ENCODE measurements at regions of chr10 and their contacts with region 1.

Region 1: DNA sequence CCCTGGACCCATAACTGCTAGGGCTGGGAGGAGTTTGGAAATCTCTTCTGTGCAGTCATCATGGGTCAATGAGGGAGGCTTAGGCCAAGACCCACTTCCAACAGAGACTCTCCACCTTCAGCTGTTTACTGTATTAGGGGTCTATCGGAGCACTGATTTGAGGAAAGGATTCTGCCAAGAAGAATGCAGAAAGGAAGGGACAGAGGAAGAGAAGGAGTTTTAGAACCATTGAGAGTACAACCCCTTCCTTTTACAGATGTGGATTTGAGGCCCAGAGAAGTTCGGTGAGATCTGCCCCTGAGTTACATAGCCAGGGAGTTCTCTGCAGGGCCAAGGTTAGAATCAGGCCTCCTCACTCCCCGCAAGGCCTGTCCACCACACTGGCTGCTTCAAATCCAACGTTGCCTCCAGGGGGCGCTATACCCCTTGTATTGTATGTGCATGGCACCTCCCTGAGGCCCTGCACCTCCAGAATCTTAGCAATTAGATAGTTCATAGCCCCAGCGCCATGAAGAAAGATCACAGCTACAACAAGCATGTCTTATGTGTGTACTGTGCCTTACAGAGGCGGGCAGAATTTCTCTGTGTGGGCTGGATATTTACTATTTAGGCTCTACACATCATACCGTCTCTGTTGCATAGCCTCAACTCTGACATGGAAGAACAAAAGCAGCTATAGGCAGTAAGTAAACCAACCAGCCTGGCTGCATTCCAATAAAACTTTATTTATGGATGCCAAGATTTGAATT is 246.8 kb downstream of the SKIDA1 start:
- DNase-seq: peak; percentile 83 to 97
- ATAC-seq: peak; percentile 94 to 96
- H3K4me3 ChIP-seq: no peak overlapping the region
- H3K27ac ChIP-seq: peak overlapping the region; percentile 74 to 85
- H3K4me1 ChIP-seq: peaks cover 66% of the 10 kb centered on the region
- CTCF ChIP-seq: peak; percentile 88
- EP300 ChIP-seq: no peak
- POLR2A ChIP-seq: no peak
- RAD21 ChIP-seq: peak; percentile 97 to 98

Region 2: DNA sequence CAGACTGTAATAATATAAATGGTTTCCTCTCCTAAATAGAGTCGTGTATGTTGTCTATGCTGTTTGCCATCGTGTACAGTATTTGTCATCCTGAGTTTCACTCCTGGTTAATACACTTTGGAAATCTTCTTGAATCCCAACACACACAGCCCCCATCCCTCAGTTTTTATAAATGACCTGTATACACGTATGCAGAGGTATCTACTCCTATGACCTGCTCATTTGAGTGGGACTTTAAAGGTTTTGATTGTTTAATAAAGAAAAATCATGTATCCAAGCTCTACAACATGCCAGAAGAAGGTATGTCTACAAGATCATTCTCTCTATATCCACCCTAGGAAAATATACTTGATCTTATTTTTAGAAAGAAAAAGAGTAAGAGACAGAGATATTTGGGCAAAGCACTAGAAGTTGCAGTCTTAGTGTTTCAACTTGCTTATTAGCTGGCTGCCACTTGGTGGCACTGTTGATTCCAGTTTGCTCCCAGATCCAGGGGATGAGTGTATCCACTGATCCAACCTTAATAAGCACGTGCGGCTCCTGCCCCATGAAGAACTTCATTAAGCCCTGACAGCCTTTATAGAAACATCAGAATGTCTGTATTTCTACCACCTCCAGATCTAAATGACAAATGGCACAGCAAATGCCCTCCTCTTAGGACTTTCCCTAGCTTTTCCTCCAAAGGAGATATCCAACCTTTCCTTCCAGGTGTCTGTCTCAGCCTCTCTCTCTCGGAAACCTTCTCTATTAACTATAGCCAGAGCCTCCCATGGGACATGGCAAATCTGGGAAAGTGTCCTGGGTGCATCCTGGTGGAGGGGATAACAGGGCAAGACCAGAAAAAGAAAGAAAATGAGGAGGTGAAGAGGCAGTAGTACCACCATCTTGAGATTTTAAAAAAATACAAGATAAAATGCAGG is 200.0 kb before region 1 on chr10:
- CTCF ChIA-PET with region 1: interaction called, 137 read pairs
- POLR2A ChIA-PET with region 1: no interaction called
- DNase-seq: peak; percentile 55 to 81
- ATAC-seq: peak; percentile 95 to 97
- H3K4me3 ChIP-seq: no peak overlapping the region
- H3K27ac ChIP-seq: peak overlapping the region; percentile 74 to 75
- H3K4me1 ChIP-seq: peaks cover 20% of the 10 kb centered on the region
- CTCF ChIP-seq: peak; percentile 92
- EP300 ChIP-seq: no peak
- POLR2A ChIP-seq: no peak
- RAD21 ChIP-seq: peak; percentile 98

Region 3: DNA sequence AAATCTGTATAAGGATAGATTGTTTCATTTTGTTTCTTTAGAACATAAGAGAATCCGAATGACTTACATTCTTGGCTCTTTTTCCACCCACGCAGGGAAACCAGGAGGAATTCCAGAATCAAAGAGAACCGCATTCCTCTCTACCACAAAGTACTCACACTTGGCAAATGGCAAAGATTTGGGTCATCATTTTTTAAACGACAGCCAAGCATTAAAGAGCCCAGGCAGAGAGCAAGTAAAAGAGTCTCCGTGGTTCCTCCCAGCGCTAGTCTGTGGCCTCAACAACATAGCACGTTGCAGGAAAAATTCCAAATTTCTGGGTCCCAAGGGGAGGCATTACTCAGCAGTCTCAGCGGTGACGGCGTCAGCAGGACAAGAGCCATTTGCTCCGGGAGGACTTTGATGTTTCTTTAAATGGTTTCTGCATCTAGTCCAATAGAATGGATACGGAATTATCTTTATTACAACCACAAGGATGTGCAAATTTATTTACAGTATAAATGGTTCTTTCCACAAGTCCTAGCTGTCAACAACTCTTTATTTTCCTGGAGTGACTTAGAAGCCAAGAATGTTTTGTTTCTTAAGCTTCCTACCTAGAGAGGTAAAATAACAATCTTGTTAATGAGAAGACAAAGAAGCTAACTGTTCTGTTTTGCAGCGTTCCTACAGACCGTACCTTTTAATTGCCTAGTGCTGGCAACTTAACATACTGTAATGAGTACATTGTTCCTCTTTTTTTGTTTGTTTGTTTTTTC is 14.3 kb after region 1 on chr10:
- CTCF ChIA-PET with region 1: interaction called, 13 read pairs
- POLR2A ChIA-PET with region 1: interaction called, 8 read pairs
- DNase-seq: peak; percentile 89 to 98
- ATAC-seq: peak; percentile 93 to 97
- H3K4me3 ChIP-seq: peak overlapping the region; percentile 44
- H3K27ac ChIP-seq: peak overlapping the region; percentile 92 to 97
- H3K4me1 ChIP-seq: peaks cover 59% of the 10 kb centered on the region
- CTCF ChIP-seq: no peak
- EP300 ChIP-seq: peak; percentile 86 to 98
- POLR2A ChIP-seq: no peak
- RAD21 ChIP-seq: peak; percentile 40 to 65

Region 4: GRCh38 chr10:21304608-21305007 is 25.9 kb after region 1 on chr10:
- CTCF ChIA-PET with region 1: interaction called, 11 read pairs
- POLR2A ChIA-PET with region 1: no interaction called
- DNase-seq: no peak
- ATAC-seq: no peak; a peak in 1 of 6 replicates
- H3K4me3 ChIP-seq: no peak overlapping the region
- H3K27ac ChIP-seq: peak overlapping the region; percentile 10 to 71
- H3K4me1 ChIP-seq: peaks cover 13% of the 10 kb centered on the region
- CTCF ChIP-seq: no peak
- EP300 ChIP-seq: no peak
- POLR2A ChIP-seq: no peak
- RAD21 ChIP-seq: no peak

Region 5: DNA sequence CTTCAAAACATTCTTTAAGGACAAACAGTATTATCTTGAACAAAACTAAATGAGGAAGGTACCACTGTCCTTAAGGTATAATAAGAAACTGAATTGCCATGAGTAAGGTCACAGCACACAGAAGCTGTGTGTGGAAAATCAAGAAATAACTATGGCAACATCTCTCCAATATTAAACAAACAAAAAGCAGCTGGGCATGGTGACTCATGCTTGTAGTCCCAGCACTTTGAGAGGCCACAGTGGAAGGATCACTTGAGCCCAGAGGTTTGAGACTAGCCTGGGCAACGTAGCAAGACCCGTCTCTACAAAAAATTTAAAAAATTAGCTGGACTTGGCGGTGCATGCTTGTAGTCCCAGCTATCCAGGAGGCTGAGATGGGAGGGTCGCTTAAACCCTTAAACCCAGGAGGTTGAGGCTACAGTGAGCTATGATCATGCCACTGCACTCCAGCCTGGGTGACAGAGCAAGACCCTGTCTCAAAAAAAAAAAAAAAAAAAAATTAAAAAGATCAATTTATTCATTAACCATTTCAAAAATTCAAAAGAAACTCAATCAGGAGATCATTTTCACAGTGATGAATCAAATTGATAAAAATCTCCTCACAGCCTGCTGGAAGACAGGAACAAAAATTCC is 51.4 kb after region 1 on chr10:
- CTCF ChIA-PET with region 1: interaction called, 11 read pairs
- POLR2A ChIA-PET with region 1: interaction called, 3 read pairs
- DNase-seq: peak; percentile 64 to 94
- ATAC-seq: peak; percentile 83 to 93
- H3K4me3 ChIP-seq: no peak overlapping the region
- H3K27ac ChIP-seq: peak overlapping the region; percentile 95 to 96
- H3K4me1 ChIP-seq: peaks cover 64% of the 10 kb centered on the region
- CTCF ChIP-seq: no peak
- EP300 ChIP-seq: no peak
- POLR2A ChIP-seq: no peak
- RAD21 ChIP-seq: peak; percentile 23 to 26; a peak in 2 of 5 replicates

Region 6: GRCh38 chr10:21336476-21337170 is 58.0 kb after region 1 on chr10:
- CTCF ChIA-PET with region 1: interaction called, 21 read pairs
- POLR2A ChIA-PET with region 1: no interaction called
- DNase-seq: peak; percentile 86 to 97
- ATAC-seq: peak; percentile 88 to 90
- H3K4me3 ChIP-seq: no peak overlapping the region
- H3K27ac ChIP-seq: peak overlapping the region; percentile 95 to 96
- H3K4me1 ChIP-seq: peaks cover 55% of the 10 kb centered on the region
- CTCF ChIP-seq: peak; percentile 31
- EP300 ChIP-seq: peak; percentile 58 to 73; a peak in 3 of 5 replicates
- POLR2A ChIP-seq: no peak
- RAD21 ChIP-seq: peak; percentile 63 to 75

Region 7: DNA sequence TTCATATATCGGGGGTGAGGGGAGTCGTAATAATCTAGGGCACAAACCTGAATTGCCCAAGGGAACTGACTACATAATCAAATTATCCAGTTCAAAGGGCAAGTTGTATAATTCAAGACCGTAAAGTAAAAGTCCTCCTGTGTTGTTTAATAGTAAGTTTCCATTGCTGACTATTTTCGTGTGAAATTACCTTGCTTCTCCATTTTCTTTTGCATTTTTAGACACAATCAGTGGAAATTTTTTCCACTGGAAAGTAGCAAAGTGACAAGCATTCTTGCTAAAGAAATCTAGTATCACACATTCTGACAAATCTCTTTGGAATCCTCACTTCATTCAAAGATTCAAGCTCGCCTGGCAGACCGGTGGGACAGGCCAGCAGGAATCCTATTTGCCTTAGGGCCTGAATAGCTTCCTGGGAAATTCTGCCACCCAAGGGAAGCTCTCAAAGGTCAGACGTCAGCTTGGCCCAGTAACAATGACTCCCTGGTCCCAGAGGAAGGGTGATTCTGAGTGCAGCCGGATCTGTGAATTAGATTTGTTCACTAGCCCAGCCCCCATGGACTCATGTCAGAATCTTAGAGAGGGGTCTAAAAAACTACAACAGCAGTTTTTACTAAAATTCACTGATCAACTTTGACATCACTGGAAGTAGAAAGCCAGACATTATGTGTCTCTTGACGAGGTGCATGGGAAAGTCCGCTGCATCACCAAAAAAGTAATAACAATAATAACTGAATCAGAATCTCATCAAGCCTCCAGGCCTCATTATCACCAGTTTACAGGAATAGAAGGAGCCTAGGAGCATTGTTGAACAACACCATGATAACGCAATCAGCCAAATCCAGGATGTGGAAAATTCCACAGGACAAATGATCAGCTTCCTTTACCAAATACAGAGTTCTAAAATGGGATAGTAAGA is 85.8 kb after region 1 on chr10:
- CTCF ChIA-PET with region 1: interaction called, 16 read pairs
- POLR2A ChIA-PET with region 1: interaction called, 6 read pairs
- DNase-seq: peak; percentile 89 to 99
- ATAC-seq: peak; percentile 96 to 97
- H3K4me3 ChIP-seq: peak overlapping the region; percentile 18; the same call in 1 of the 3 replicates
- H3K27ac ChIP-seq: peak overlapping the region; percentile 95 to 98
- H3K4me1 ChIP-seq: peaks cover 80% of the 10 kb centered on the region
- CTCF ChIP-seq: no peak
- EP300 ChIP-seq: peak; percentile 89 to 96; a peak in 4 of 5 replicates
- POLR2A ChIP-seq: no peak
- RAD21 ChIP-seq: peak; percentile 56 to 64

Region 8: DNA sequence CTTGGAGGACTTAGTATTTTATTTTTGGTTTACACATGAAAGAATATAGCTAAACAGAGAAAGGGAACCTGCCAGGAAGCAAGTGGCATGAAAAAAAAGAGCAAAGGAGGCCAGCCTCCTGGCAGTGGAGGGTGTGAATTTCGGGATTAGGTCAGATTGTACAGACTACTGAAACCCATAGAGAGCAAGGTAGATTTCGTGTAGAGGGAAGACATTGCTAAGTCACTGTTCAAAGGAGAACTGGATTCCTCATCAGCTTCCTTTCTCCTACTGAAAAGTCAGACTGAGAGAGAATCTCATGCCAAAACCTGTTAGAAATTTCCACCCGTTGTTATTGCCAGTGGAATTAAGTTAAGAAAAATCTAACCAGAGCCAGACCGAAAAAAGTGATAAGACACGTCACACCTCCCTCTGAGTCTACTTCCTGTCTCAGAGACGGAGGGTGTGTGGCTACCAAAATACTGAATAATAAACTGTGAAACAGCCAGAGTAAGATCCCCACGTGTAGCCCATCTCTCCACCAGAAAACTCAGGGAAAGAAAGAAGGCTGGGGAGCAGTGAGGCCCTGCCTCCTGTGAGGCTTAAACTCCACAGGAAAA is 128.0 kb after region 1 on chr10:
- CTCF ChIA-PET with region 1: no interaction called
- POLR2A ChIA-PET with region 1: no interaction called
- DNase-seq: no peak
- ATAC-seq: no peak
- H3K4me3 ChIP-seq: no peak overlapping the region
- H3K27ac ChIP-seq: peak overlapping the region in 1 of 2 experiments; percentile 59; a peak in 3 of 6 replicates
- H3K4me1 ChIP-seq: peaks cover 34% of the 10 kb centered on the region
- CTCF ChIP-seq: no peak
- EP300 ChIP-seq: no peak
- POLR2A ChIP-seq: no peak
- RAD21 ChIP-seq: no peak

Region 9: GRCh38 chr10:21572578-21572977 is 293.9 kb after region 1 on chr10:
- CTCF ChIA-PET with region 1: no interaction called
- POLR2A ChIA-PET with region 1: no interaction called
- DNase-seq: no peak
- ATAC-seq: no peak
- H3K4me3 ChIP-seq: no peak overlapping the region
- H3K27ac ChIP-seq: peak overlapping the region in 1 of 2 experiments; percentile 42; a peak in 1 of 6 replicates
- H3K4me1 ChIP-seq: peaks cover 28% of the 10 kb centered on the region
- CTCF ChIP-seq: no peak
- EP300 ChIP-seq: no peak
- POLR2A ChIP-seq: no peak
- RAD21 ChIP-seq: no peak

Measured in A549 (cell line).